HAP-1 (cell line): ENCODE measurements at regions of chr20 and their contacts with region 1.

Region 1: GRCh38 chr20:19661717-19662636 is 96.1 kb upstream of the RIN2 start:
- DNase-seq: peak; percentile 40 to 67
- H3K4me3 ChIP-seq: no peak overlapping the region
- H3K4me1 ChIP-seq: no peaks in the 10 kb centered on the region
- H3K27me3 ChIP-seq: peaks cover 7% of the 10 kb centered on the region; the same call in 1 of the 2 replicates

Region 2: GRCh38 chr20:18632196-18633009 is 1029.6 kb before region 1 on chr20:
- in situ Hi-C with region 1: loop called (anchors 25 kb)
- DNase-seq: peak; percentile 61 to 83
- H3K4me3 ChIP-seq: no peak overlapping the region
- H3K4me1 ChIP-seq: no peaks in the 10 kb centered on the region
- H3K27me3 ChIP-seq: no peaks in the 10 kb centered on the region

Region 3: DNA sequence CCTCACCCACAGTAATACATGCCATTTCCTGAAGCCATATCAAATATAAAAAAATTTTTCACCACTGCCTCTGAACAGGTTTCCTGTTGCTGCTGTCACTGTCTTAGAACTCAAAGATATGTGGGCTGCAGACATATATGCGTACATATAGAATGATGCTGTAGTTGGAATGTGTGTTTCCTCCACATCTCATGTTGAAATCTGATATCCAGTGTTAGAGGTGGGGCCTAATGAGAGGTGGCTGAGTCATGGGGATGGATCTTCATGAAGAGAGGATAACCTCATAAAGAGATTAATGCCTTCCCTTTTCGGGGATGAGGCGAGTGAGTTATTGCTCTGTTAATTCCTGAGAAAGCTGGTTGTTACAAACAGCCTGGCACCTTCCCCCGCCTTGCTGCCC is 856.1 kb before region 1 on chr20:
- in situ Hi-C with region 1: loop called (anchors 25 kb)
- DNase-seq: no peak
- H3K4me3 ChIP-seq: no peak overlapping the region
- H3K4me1 ChIP-seq: no peaks in the 10 kb centered on the region
- H3K27me3 ChIP-seq: 0 out of 2 replicates have a peak, but pooled peaks cover 2% of the 10 kb centered on the region

Region 4: DNA sequence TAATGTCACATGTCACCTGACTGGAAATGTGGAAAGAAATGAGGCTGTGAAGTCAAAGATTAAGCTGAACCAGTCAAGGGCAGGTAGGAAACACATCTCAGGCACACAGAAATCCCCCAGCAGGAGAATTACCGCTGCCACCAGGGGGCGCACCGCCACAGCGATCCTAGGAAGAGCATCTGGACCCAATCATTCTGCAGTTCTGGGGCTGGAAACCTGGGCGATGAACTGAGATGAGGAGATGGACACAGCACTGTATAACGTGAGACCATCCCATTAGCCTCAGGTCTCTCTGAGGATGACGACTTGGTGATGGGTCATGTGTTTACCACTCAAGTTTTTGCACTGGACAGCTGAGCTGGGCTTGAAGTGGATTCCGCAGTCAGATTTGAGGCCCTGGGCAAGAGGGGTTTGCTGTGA is 456.0 kb before region 1 on chr20:
- in situ Hi-C with region 1: loop called (anchors 25 kb)
- DNase-seq: peak; percentile 20 to 81
- H3K4me3 ChIP-seq: no peak overlapping the region
- H3K4me1 ChIP-seq: no peaks in the 10 kb centered on the region
- H3K27me3 ChIP-seq: peaks cover 2% of the 10 kb centered on the region; the same call in 1 of the 2 replicates

Region 5: GRCh38 chr20:19241440-19241839 is 420.5 kb before region 1 on chr20:
- in situ Hi-C with region 1: no loop called
- DNase-seq: no peak
- H3K4me3 ChIP-seq: no peak overlapping the region
- H3K4me1 ChIP-seq: no peaks in the 10 kb centered on the region
- H3K27me3 ChIP-seq: no peaks in the 10 kb centered on the region

Region 6: GRCh38 chr20:19397666-19398065 is 264.3 kb before region 1 on chr20:
- in situ Hi-C with region 1: no loop called
- DNase-seq: no peak
- H3K4me3 ChIP-seq: no peak overlapping the region
- H3K4me1 ChIP-seq: no peaks in the 10 kb centered on the region
- H3K27me3 ChIP-seq: no peaks in the 10 kb centered on the region

Region 7: GRCh38 chr20:20334489-20334888 is 672.5 kb after region 1 on chr20:
- in situ Hi-C with region 1: no loop called
- DNase-seq: no peak
- H3K4me3 ChIP-seq: no peak overlapping the region
- H3K4me1 ChIP-seq: no peaks in the 10 kb centered on the region
- H3K27me3 ChIP-seq: no peaks in the 10 kb centered on the region